PC-3 (cell line): ENCODE measurements at regions of chr21 and their contacts with region 1.

Region 1: GRCh38 chr21:27329255-27329851 is 362.5 kb upstream of the ADAMTS5 start:
- DNase-seq: peak; percentile 18
- ATAC-seq: peak; percentile 48
- H3K4me3 ChIP-seq: no peak overlapping the region
- H3K27ac ChIP-seq: no peak overlapping the region
- H3K4me1 ChIP-seq: no peaks in the 10 kb centered on the region
- H3K27me3 ChIP-seq: no peaks in the 10 kb centered on the region
- CTCF ChIP-seq: no peak

Region 2: DNA sequence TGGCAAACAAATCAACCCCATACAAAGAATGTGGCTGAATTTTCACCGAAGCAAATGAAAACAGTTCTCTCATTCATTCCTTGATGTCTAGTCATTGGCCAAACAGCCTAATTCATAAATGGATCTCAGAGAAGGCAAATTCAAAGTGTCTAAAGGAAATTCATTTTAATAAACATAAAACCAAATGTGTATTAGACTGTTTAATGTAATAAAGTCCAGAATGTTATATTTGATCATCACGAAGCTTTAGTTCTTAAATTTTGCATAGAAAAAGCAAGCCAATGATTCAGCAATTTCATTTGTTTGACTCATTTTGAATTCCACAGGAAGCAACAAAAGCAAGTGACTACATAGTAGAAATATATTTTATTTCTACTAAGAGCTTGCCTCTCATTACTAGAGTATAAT is 16.7 kb after region 1 on chr21:
- CTCF ChIA-PET with region 1: no interaction called
- POLR2A ChIA-PET with region 1: no interaction called
- intact Hi-C with region 1: loop called (anchors 2 kb)
- DNase-seq: peak; percentile 29
- ATAC-seq: peak; percentile 44
- H3K4me3 ChIP-seq: no peak overlapping the region
- H3K27ac ChIP-seq: peak overlapping the region; percentile 53
- H3K4me1 ChIP-seq: no peaks in the 10 kb centered on the region
- H3K27me3 ChIP-seq: no peaks in the 10 kb centered on the region
- CTCF ChIP-seq: no peak